Stomach (tissue), 19 donors: ENCODE measurements at regions of chr19 and their contacts with region 1.

Region 1: DNA sequence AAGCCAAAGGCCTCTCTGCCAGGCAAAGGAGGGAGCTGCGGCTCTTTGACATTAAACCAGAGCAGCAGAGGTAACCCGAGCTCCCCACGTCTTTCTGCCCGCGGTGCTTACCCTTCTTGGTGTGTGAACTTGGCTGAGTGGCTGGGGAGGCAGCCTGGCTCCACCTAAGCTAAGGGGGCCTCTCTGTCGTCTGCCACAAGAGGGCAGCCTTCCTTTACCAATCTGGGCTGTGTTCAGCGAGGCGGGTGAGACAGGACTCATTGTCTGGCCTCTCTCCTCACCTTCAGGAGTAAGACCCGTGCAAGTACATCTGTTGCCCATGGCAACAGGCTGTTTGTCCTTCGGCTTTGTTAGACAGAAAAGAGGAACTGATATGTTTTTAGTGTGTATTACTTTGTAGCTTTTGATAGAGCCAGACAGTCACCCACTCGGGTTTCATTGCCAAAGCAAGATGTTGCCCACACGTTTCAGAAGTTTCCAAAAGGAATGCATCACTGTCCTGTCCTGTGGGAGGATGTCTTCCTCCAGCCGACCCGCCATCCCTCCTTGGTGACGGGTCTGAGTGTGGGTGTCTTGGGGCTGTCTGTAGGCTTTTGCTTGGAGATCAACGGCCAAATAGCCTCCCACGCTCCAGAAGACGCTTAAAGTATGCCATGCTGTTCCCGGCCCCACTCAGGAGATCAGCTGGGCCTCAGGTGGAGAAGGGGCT is 4.6 kb downstream of the POP4 start:
- DNase-seq: peak; percentile 85 to 93
- H3K4me3 ChIP-seq: no peak overlapping the region
- H3K27ac ChIP-seq: no peak overlapping the region
- H3K4me1 ChIP-seq: peaks cover 6 to 24% (median 21%) of the 10 kb centered on the region in 4 donors
- H3K27me3 ChIP-seq: no peaks in the 10 kb centered on the region
- CTCF ChIP-seq: peak in 5 of 7 experiments; percentile 73 to 91 (median 76)
- EP300 ChIP-seq: no peak
- POLR2A ChIP-seq: no peak

Region 2: DNA sequence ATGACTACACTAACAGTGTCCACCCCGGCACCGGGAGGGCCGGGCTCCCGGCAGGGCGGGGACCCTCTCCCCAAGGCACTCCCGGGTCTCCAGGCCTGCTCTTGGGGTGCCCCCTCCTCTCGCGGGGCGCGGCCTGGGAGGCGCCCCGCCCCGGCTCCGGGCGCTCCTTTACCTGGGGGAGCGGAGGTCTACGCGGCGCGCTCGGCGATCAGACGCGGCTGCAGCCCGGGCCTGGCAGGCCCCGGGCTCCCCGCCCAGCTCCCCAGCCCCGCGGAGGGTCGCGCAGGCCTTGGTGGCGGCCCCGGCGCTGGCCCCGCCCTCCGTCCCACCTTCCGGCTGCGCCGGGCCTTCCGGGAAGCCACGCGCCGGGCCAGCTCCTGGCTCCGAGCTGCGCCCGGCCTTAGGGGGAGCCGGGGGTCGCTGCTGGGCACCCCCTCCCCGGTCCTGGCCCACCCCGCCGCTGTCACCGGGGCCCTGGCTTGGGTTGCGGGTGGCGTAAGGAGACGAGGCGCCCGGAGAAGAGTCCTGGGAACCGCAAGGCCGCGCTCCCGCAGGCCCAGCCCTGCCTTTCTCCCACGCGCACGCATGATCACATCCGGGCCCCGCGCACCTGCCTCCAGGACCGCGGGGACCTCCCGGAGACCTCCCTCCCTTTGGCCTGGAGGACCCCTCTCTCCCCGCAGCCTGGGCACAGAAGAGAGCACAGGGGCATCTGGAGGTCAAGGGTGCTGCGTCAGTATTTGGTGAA is 104.4 kb after region 1 on chr19 and contains the start of gene C19orf12:
- intact Hi-C with region 1: loop called (anchors 5 kb)
- DNase-seq: peak; percentile 68 to 90
- H3K4me3 ChIP-seq: peak within 1 kb of the TSS; percentile 86 to 95 (median 88)
- H3K27ac ChIP-seq: peak within 1 kb of the TSS; percentile 89 to 98 (median 94)
- H3K4me1 ChIP-seq: peaks cover 19 to 59% (median 45%) of the 10 kb centered on the region in 4 donors
- H3K27me3 ChIP-seq: no peaks in the 10 kb centered on the region
- CTCF ChIP-seq: no peak
- EP300 ChIP-seq: no peak
- POLR2A ChIP-seq: peak in 1 of 4 donors; percentile 33
- total RNA-seq, gene C19orf12: 4.6 to 67.2 (median 33.0) TPM